ENCODE measurements at regions of chr9 and their contacts with region 1.

Region 1: GRCh38 chr9:83583151-83584014 is 39.6 kb upstream of the IDNK start:
- DNase-seq: peak; percentile 27
- H3K4me3 ChIP-seq: no peak overlapping the region
- H3K27ac ChIP-seq: no peak overlapping the region
- H3K4me1 ChIP-seq: no peaks in the 10 kb centered on the region
- H3K27me3 ChIP-seq: no peaks in the 10 kb centered on the region
- CTCF ChIP-seq: peak; percentile 51 to 70 (median 62)
- EP300 ChIP-seq: no peak
- POLR2A ChIP-seq: no peak

Region 2: GRCh38 chr9:83219152-83219923 is 364.0 kb before region 1 on chr9:
- in situ Hi-C with region 1: loop called in 1 of 4 experiments (anchors 25 kb)
- intact Hi-C with region 1: no loop called
- DNase-seq: peak; percentile 73
- H3K4me3 ChIP-seq: peak overlapping the region; percentile 19 to 69 (median 46)
- H3K27ac ChIP-seq: peak overlapping the region; percentile 57 to 78 (median 68)
- H3K4me1 ChIP-seq: peaks cover 0 to 4% (median 0%) of the 10 kb centered on the region in 4 donors
- H3K27me3 ChIP-seq: no peaks in the 10 kb centered on the region
- CTCF ChIP-seq: peak in 2 of 5 experiments; percentile 40 to 46
- EP300 ChIP-seq: no peak
- POLR2A ChIP-seq: no peak

Region 3: DNA sequence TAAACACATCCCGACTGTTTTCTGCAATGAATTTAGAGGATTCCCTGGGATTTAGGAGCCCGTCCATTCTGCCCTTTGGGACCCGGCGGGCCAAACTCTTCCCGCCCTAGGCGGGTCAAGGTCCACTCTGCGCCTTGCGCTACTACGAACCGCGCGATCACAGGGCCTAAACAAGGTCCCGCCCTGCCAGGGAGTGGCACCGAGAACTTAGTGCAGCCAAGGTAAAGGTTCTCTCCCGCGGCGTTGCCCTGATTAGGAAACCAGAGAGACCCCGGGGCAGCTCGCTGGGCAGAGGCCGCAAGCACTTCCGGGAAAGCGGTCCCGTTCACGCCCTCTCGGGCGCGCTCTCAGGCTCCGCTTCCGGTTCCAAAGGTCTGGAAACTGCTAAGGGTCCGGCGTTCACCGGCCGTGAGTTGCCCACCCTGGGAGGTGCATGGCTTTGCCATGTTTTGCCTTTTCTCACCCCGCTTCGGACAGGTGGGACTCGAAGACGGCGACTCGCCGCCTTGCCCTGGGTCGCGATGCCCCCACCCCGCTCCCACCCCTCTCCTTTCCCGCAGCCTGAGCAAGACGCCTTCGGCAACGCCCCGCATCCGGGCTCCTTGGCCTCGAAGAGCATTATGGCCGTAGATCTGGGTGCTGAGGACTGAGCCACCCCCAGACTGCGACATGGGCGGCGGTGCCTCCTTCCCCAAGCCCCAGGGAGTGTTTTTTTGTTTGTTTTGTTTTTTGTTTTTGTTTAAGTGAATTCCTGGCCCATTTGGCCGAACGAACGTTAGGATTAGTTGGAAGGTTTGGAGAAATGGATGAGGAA is 373.3 kb after region 1 on chr9:
- in situ Hi-C with region 1: no loop called
- intact Hi-C with region 1: no loop called
- DNase-seq: peak; percentile 91
- H3K4me3 ChIP-seq: peak overlapping the region; percentile 58 to 79 (median 66)
- H3K27ac ChIP-seq: peak overlapping the region; percentile 89 to 93 (median 90)
- H3K4me1 ChIP-seq: peaks cover 4 to 23% (median 8%) of the 10 kb centered on the region in 4 donors
- H3K27me3 ChIP-seq: no peaks in the 10 kb centered on the region
- CTCF ChIP-seq: no peak
- EP300 ChIP-seq: no peak
- POLR2A ChIP-seq: peak; percentile 67